Activated T-helper 2 cell treated with anti-CD3 and anti-CD28 coated beads, Interferon-gamma antibody, Interleukin-2, Interleukin-4, amounts not matched to agents 10 μg/mL and 5 μg/mL and 100 μg/mL, durations not matched to agents 14 hours and 24 hours and 36 hours (primary cell): ENCODE measurements at regions of chr4 and their contacts with region 1.

Region 1: GRCh38 chr4:184627765-184628480 is 21.3 kb downstream of the CASP3 start:
- DNase-seq: no peak
- H3K4me3 Mint-ChIP-seq: no peak overlapping the region
- H3K27ac Mint-ChIP-seq: no peak overlapping the region
- H3K4me1 Mint-ChIP-seq: peaks cover 41% of the 10 kb centered on the region
- H3K27me3 Mint-ChIP-seq: no peaks in the 10 kb centered on the region

Region 2: GRCh38 chr4:184583738-184584502 is 44.0 kb before region 1 on chr4:
- intact Hi-C with region 1: loop called (anchors 5 kb)
- DNase-seq: no peak
- H3K4me3 Mint-ChIP-seq: no peak overlapping the region
- H3K27ac Mint-ChIP-seq: peak overlapping the region; percentile 85
- H3K4me1 Mint-ChIP-seq: peaks cover 26% of the 10 kb centered on the region
- H3K27me3 Mint-ChIP-seq: no peaks in the 10 kb centered on the region